Breast epithelium (tissue), 4 donors: ENCODE measurements at regions of chrX and their contacts with region 1.

Region 1: GRCh38 chrX:150627957-150628356 is 59.5 kb downstream of the MTM1 start:
- DNase-seq: no peak
- H3K4me3 ChIP-seq: no peak overlapping the region
- H3K27ac ChIP-seq: no peak overlapping the region
- H3K4me1 ChIP-seq: no peaks in the 10 kb centered on the region
- H3K27me3 ChIP-seq: peaks cover 0 to 18% of the 10 kb centered on the region in 2 donors
- CTCF ChIP-seq: no peak
- POLR2A ChIP-seq: no peak

Region 2: DNA sequence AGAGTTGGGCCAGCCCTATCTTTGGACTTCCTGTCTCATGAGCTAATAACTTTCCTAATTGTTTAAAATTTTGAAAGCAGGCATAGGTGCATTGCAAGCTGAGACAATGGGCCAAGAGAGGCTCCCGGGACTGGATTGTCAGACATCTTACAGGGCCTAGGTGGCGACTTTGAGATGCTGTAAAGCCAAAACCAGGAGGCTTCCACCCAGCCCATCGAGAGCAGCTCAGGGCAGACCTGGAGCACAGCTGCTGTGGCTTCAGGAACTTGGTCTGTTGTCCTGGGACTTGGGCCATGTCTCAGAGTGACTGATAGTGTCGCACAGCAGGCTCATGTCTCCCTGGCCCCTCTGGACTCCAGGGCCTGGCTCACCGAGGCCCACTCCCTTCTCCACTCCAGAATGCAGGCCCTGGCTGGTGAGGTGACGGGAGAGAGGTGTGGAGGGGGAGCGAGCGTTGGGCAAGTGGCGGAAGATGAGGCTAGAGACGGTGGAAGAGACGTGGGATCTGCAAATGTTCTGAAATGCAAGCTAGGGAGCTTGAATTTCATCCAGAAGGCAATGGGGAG is 83.7 kb before region 1 on chrX:
- intact Hi-C with region 1: no loop called
- DNase-seq: no peak
- H3K4me3 ChIP-seq: no peak overlapping the region
- H3K27ac ChIP-seq: no peak overlapping the region
- H3K4me1 ChIP-seq: no peaks in the 10 kb centered on the region
- H3K27me3 ChIP-seq: peaks cover 0 to 23% of the 10 kb centered on the region in 2 donors
- CTCF ChIP-seq: no peak
- POLR2A ChIP-seq: no peak

Region 3: GRCh38 chrX:150587585-150588503 is 40.1 kb before region 1 on chrX:
- intact Hi-C with region 1: loop called (anchors 1 kb)
- DNase-seq: no peak
- H3K4me3 ChIP-seq: no peak overlapping the region
- H3K27ac ChIP-seq: no peak overlapping the region
- H3K4me1 ChIP-seq: no peaks in the 10 kb centered on the region
- H3K27me3 ChIP-seq: no peaks in the 10 kb centered on the region
- CTCF ChIP-seq: peak; percentile 28 to 30 (median 29)
- POLR2A ChIP-seq: no peak

Region 4: GRCh38 chrX:150676221-150676620 is 48.3 kb after region 1 on chrX:
- intact Hi-C with region 1: loop called (anchors 2 kb)
- DNase-seq: no peak
- H3K4me3 ChIP-seq: no peak overlapping the region
- H3K27ac ChIP-seq: no peak overlapping the region
- H3K4me1 ChIP-seq: no peaks in the 10 kb centered on the region
- H3K27me3 ChIP-seq: peaks cover 0 to 16% of the 10 kb centered on the region in 2 donors
- CTCF ChIP-seq: no peak
- POLR2A ChIP-seq: no peak